Mammary epithelial cell (primary cell): ENCODE measurements at regions of chr4 and their contacts with region 1.

Region 1: GRCh38 chr4:68498413-68499007 is 51.2 kb downstream of the TMPRSS11E start:
- DNase-seq: peak; percentile 41
- H3K4me3 ChIP-seq: no peak overlapping the region
- H3K27ac ChIP-seq: no peak overlapping the region
- H3K4me1 ChIP-seq: no peaks in the 10 kb centered on the region
- H3K27me3 ChIP-seq: no peaks in the 10 kb centered on the region
- CTCF ChIP-seq: peak; percentile 89

Region 2: GRCh38 chr4:68271851-68272756 is 226.4 kb before region 1 on chr4:
- CTCF ChIA-PET with region 1: no interaction called
- dilution Hi-C with region 1: no loop called
- in situ Hi-C with region 1: no loop called
- intact Hi-C with region 1: loop called (anchors 2 kb)
- DNase-seq: peak; percentile 51
- H3K4me3 ChIP-seq: peak overlapping the region; percentile 32 to 40 (median 33)
- H3K27ac ChIP-seq: no peak overlapping the region
- H3K4me1 ChIP-seq: peaks cover 18% of the 10 kb centered on the region
- H3K27me3 ChIP-seq: no peaks in the 10 kb centered on the region
- CTCF ChIP-seq: peak; percentile 59 to 61

Region 3: GRCh38 chr4:68569466-68570121 is 71.1 kb after region 1 on chr4:
- CTCF ChIA-PET with region 1: no interaction called
- dilution Hi-C with region 1: no loop called
- in situ Hi-C with region 1: no loop called
- intact Hi-C with region 1: loop called (anchors 1 kb)
- DNase-seq: no peak
- H3K4me3 ChIP-seq: no peak overlapping the region
- H3K27ac ChIP-seq: no peak overlapping the region
- H3K4me1 ChIP-seq: no peaks in the 10 kb centered on the region
- H3K27me3 ChIP-seq: no peaks in the 10 kb centered on the region
- CTCF ChIP-seq: no peak

Region 4: GRCh38 chr4:68655764-68656444 is 157.4 kb after region 1 on chr4:
- CTCF ChIA-PET with region 1: no interaction called
- dilution Hi-C with region 1: no loop called
- in situ Hi-C with region 1: loop called in 1 of 2 experiments (anchors 25 kb)
- intact Hi-C with region 1: no loop called
- DNase-seq: no peak
- H3K4me3 ChIP-seq: no peak overlapping the region
- H3K27ac ChIP-seq: peak overlapping the region; percentile 64
- H3K4me1 ChIP-seq: peaks cover 19% of the 10 kb centered on the region
- H3K27me3 ChIP-seq: no peaks in the 10 kb centered on the region
- CTCF ChIP-seq: no peak

Region 5: DNA sequence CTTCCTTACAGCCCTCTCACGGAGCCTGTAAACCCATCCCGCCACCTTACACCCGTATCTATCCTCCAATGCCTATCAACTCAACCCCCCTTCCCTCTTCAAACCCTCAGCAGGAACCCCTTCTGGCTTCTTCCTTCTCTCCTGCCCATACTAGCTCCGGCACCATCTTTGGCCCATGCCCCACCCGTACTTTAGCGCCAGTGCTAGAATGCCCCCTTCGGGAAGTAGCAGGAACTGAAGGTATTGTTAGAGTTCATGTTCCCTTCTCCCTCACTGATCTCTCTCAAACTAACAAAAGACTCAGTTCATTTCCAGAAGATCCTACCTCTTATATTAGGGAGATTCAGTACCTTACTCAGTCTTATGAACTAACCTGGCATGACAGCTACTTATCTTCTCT is 174.6 kb after region 1 on chr4:
- CTCF ChIA-PET with region 1: no interaction called
- dilution Hi-C with region 1: no loop called
- in situ Hi-C with region 1: loop called in 1 of 2 experiments (anchors 25 kb)
- intact Hi-C with region 1: loop called (anchors 1 kb)
- DNase-seq: no peak
- H3K4me3 ChIP-seq: no peak overlapping the region
- H3K27ac ChIP-seq: no peak overlapping the region
- H3K4me1 ChIP-seq: no peaks in the 10 kb centered on the region
- H3K27me3 ChIP-seq: no peaks in the 10 kb centered on the region
- CTCF ChIP-seq: no peak

Region 6: GRCh38 chr4:69156913-69157312 is 658.4 kb after region 1 on chr4:
- CTCF ChIA-PET with region 1: no interaction called
- dilution Hi-C with region 1: no loop called
- in situ Hi-C with region 1: loop called in 1 of 2 experiments (anchors 10 kb)
- intact Hi-C with region 1: no loop called
- DNase-seq: peak; percentile 1
- H3K4me3 ChIP-seq: no peak overlapping the region
- H3K27ac ChIP-seq: no peak overlapping the region
- H3K4me1 ChIP-seq: no peaks in the 10 kb centered on the region
- H3K27me3 ChIP-seq: no peaks in the 10 kb centered on the region
- CTCF ChIP-seq: peak; percentile 54 to 62

Region 7: DNA sequence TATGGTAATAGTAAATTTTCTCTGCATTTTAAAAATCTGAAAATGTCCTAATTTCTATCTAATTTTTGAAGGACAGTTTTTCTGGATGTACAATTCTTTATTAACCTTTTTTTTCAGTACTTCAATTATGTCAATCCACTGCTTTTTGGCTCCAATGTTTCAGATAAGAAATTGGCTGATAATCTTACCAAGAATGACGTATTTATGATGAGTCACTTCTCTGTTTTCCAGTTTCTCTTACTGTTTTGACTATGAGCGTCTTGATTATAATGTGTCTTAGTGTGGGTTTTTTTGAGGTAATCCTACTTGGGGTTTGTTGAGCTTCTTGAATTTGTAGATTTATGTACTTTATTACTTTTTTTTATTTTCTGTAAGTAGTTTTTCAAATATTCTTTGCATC is 668.8 kb after region 1 on chr4:
- CTCF ChIA-PET with region 1: no interaction called
- dilution Hi-C with region 1: no loop called
- in situ Hi-C with region 1: loop called in 1 of 2 experiments (anchors 10 kb)
- intact Hi-C with region 1: loop called (anchors 1 kb)
- DNase-seq: peak; percentile 2
- H3K4me3 ChIP-seq: no peak overlapping the region
- H3K27ac ChIP-seq: no peak overlapping the region
- H3K4me1 ChIP-seq: no peaks in the 10 kb centered on the region
- H3K27me3 ChIP-seq: peaks cover 2% of the 10 kb centered on the region
- CTCF ChIP-seq: no peak